ENCODE measurements at regions of chr17 and their contacts with region 1.

Region 1: DNA sequence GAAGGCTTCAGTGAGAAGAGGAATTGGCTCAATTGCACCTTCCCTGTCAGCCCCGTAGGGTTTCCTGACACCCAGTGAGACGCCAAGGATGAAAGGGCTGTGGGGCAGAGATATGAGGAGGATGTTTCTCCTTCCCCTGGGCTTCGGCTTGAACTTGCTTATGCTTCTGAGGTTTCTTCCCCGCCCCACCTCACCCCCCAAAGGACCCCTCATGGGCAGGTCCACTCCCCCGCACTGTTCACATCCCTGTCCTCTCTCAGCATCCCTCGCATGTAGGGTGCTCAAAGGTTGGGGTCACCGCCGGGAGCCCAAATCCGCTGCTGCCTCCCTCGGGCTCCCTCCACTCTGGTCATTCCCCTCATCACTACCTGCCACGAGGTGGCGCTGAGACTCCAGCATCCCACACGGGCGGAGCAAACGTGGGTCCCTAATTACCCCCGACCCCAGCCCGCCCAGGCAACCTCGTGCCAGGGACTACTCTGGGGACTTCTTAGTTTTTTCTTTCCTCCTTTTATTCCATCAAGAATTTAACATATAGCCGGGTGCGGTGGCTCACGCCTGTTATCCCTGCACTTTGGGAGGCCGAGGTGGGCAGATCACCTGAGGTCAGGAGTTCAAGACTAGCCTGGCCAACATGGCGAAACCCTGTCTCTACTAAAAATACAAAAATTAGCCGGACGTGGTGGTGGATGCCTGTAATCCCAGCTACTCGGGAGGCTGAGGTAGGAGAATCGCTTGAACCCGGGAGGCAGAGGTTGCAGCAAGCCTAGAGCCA is 3.3 kb upstream of the TRARG1 start:
- DNase-seq: peak; percentile 37 to 85 (median 59)
- ATAC-seq: peak; percentile 69 to 93 (median 84)
- H3K4me3 ChIP-seq: no peak overlapping the region
- H3K27ac ChIP-seq: no peak overlapping the region
- H3K4me1 ChIP-seq: no peaks in the 10 kb centered on the region
- H3K27me3 ChIP-seq: no peaks in the 10 kb centered on the region
- CTCF ChIP-seq: peak; percentile 48 to 81 (median 62)

Region 2: GRCh38 chr17:915538-916201 is 360.5 kb before region 1 on chr17:
- intact Hi-C with region 1: no loop called
- DNase-seq: no peak
- ATAC-seq: peak in 3 of 4 donors; percentile 24 to 39 (median 32)
- H3K4me3 ChIP-seq: no peak overlapping the region
- H3K27ac ChIP-seq: no peak overlapping the region
- H3K4me1 ChIP-seq: peaks cover 0 to 5% (median 0%) of the 10 kb centered on the region in 3 donors
- H3K27me3 ChIP-seq: no peaks in the 10 kb centered on the region
- CTCF ChIP-seq: no peak

Region 3: GRCh38 chr17:1216217-1217088 is 59.7 kb before region 1 on chr17:
- intact Hi-C with region 1: no loop called
- DNase-seq: no peak
- ATAC-seq: no peak
- H3K4me3 ChIP-seq: no peak overlapping the region
- H3K27ac ChIP-seq: no peak overlapping the region
- H3K4me1 ChIP-seq: peaks cover 0 to 3% (median 0%) of the 10 kb centered on the region in 3 donors
- H3K27me3 ChIP-seq: peaks cover 0 to 15% (median 2%) of the 10 kb centered on the region in 4 donors
- CTCF ChIP-seq: no peak

Region 4: DNA sequence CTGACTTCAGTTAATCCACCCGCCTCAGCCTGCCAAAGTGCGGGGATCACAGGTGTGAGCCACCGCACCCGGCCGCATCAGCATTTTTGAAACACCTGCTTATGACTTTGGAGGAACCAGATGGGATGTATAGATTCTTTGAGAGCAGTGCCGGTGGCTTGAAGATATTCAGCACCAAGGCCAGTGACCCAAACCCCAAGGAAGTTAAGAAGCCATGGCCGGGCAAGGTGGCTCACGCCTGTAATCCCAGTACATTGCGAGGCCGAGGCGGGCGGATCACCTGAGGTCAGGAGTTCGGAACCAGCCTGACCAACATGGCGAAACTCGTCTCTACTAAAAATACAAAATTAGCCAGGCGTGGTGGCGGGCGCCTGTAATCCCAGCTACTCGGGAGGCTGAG is 47.2 kb after region 1 on chr17:
- intact Hi-C with region 1: loop called in 1 of 3 experiments (anchors 5 kb)
- DNase-seq: peak in 2 of 6 donors; percentile 11 to 20
- ATAC-seq: no peak
- H3K4me3 ChIP-seq: no peak overlapping the region
- H3K27ac ChIP-seq: no peak overlapping the region
- H3K4me1 ChIP-seq: no peaks in the 10 kb centered on the region
- H3K27me3 ChIP-seq: no peaks in the 10 kb centered on the region
- CTCF ChIP-seq: no peak

Region 5: GRCh38 chr17:1516388-1517161 is 240.4 kb after region 1 on chr17 and contains the start of gene INPP5K:
- intact Hi-C with region 1: loop called in 2 of 3 experiments (anchors 10 kb)
- DNase-seq: peak; percentile 97 to 100 (median 98)
- ATAC-seq: peak; percentile 94 to 98 (median 96)
- H3K4me3 ChIP-seq: peak within 1 kb of the TSS; percentile 66 to 100 (median 86)
- H3K27ac ChIP-seq: peak within 1 kb of the TSS; percentile 53 to 87 (median 84)
- H3K4me1 ChIP-seq: peaks cover 0 to 11% (median 10%) of the 10 kb centered on the region in 3 donors
- H3K27me3 ChIP-seq: no peaks in the 10 kb centered on the region
- CTCF ChIP-seq: no peak
- total RNA-seq, gene INPP5K: 13.2 to 23.8 (median 17.2) TPM

Region 6: DNA sequence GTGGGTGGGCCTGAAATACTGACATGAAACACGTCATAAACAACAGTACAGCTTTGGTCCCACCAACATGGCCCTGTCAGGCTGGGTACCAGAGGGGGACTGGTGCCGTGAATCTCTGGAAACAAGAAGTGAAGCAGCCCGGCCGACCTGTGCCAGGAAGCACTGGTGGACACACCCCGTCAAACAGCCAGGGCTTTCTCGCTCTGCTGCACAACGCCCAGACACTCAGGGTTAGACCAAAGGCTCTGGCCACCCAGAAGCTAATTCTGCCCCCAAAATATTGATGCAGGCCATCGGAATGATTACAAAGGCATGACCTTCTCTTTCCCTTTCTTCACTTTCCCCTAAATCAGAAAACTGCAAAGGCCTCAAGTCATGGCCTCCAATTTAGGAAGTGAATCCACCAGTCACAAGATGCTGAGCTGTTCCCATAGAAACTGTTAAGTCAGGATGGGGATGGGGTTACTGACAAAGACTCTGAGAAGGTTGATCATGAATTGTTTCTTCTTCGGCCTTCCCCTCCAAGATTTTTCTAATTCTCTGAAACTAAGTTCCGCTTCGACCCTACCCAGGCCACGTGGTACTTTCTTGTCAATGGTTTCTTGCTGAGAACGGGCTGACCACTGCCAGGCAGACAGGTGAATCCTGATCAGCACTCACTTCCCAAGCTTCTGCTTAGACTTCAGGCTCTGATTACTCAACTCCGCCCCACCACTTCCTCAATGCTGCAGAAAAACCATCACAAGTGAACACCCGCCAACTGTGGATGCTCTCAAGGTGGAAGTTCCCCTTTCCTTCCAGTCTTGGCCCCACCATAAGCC is 279.7 kb after region 1 on chr17:
- intact Hi-C with region 1: loop called in 1 of 3 experiments (anchors 10 kb)
- DNase-seq: peak in 2 of 6 donors; percentile 13 to 52
- ATAC-seq: peak in 2 of 4 donors; percentile 33 to 63
- H3K4me3 ChIP-seq: no peak overlapping the region
- H3K27ac ChIP-seq: no peak overlapping the region
- H3K4me1 ChIP-seq: peaks cover 0 to 1% (median 0%) of the 10 kb centered on the region in 3 donors
- H3K27me3 ChIP-seq: no peaks in the 10 kb centered on the region
- CTCF ChIP-seq: no peak

Measured in pancreas (tissue), 10 donors.